ENCODE measurements at regions of chr4 and their contacts with region 1.

Region 1: DNA sequence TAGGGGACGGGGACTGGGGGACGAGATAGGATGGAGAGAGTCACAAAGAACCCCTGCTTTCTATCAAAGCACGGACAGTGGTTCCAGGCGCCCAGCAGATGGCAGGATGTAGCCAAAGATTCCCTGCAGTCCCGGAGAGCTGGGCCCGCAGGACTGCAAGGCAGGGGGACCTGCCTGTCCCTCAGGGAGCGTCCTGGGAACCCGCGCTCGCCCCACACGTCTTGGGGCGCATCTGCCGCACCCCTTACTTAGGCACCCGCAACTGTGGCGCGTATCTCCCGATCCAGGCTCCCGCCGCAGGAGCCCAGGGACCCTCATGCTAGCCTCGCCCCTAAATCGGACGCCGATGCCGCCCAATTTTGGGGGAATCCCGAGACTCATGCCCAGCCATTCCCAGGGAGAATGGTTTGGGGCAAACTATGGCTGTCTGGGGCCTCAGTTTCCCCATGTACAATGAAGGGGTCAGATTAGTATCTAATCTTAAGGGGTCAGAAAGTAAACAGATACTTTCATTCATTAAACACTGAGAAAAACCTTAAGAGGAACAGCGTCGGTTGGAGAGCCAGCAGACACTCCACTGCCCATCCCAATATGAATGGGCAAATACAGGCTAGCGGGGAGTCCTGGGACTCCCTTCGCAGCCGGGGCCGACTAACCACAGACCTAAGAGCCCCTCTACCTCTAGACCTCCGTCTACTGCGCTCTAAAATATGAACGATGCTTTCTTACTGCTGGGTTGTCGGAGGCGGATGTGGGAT is 581 bp upstream of the STK32B start:
- DNase-seq: peak; percentile 46
- ATAC-seq: peak; percentile 96
- H3K4me3 ChIP-seq: no peak overlapping the region
- H3K27ac ChIP-seq: no peak overlapping the region
- H3K4me1 ChIP-seq: peaks cover 11% of the 10 kb centered on the region
- H3K27me3 ChIP-seq: peaks cover 2 to 5% of the 10 kb centered on the region in 2 experiments; a peak in 1 of 5 replicates
- CTCF ChIP-seq: peak; percentile 86
- EP300 ChIP-seq: no peak
- POLR2A ChIP-seq: no peak
- RAD21 ChIP-seq: peak; percentile 82

Region 2: DNA sequence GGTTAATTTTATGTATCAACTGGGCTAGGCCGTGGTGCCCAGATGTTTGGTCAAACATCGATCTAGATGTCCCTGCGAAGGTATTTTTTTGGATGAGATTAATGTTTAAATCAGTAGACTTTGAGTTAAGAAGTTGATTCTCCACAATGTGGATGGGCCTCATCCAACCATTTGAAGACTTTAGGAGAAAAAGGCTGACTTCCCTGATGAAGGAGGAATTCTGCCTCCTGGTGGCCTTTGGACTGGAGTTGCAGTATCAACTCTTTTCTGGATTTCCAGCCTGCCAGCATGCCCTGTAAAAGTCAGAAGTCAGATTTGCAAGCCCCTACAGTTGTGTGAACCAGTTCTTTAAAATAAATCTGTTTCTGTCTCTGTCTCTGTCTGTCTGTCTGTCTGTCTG is 92.0 kb after region 1 on chr4:
- CTCF ChIA-PET with region 1: interaction called, 6 read pairs
- POLR2A ChIA-PET with region 1: no interaction called
- in situ Hi-C with region 1: loop called (anchors 10 kb)
- intact Hi-C with region 1: no loop called
- DNase-seq: peak; percentile 20
- ATAC-seq: no peak
- H3K4me3 ChIP-seq: no peak overlapping the region
- H3K27ac ChIP-seq: no peak overlapping the region
- H3K4me1 ChIP-seq: no peaks in the 10 kb centered on the region
- H3K27me3 ChIP-seq: peaks cover 0 to 1% of the 10 kb centered on the region in 2 experiments; a peak in 1 of 5 replicates
- CTCF ChIP-seq: peak; percentile 28; the same call in 1 of the 2 replicates
- EP300 ChIP-seq: no peak
- POLR2A ChIP-seq: no peak
- RAD21 ChIP-seq: no peak

Region 3: DNA sequence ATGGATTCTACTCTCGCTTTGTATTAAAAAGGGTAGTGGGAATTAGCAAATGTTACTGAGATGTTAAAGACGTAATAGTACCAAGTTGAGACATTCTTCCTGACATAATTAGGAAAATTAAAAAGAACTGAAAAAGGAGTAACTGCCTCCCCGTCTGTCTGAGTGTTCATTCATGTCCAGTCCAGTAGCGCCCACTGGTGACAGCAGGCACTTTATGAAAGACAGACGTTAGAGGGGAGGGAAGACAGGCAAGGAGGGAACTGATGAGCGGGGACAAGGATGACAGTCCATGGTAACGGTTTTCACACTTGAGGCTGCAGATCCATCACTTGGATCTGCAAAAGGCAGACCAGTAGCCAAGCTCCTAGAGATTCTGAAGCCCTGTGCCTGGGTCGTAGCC is 327.3 kb after region 1 on chr4:
- CTCF ChIA-PET with region 1: interaction called, 12 read pairs
- POLR2A ChIA-PET with region 1: no interaction called
- in situ Hi-C with region 1: no loop called
- intact Hi-C with region 1: loop called (anchors 1 kb)
- DNase-seq: peak; percentile 34
- ATAC-seq: peak; percentile 59; the same call in 1 of the 3 replicates
- H3K4me3 ChIP-seq: no peak overlapping the region
- H3K27ac ChIP-seq: no peak overlapping the region
- H3K4me1 ChIP-seq: no peaks in the 10 kb centered on the region
- H3K27me3 ChIP-seq: no peaks in the 10 kb centered on the region; a peak in 1 of 5 replicates
- CTCF ChIP-seq: peak; percentile 66
- EP300 ChIP-seq: no peak
- POLR2A ChIP-seq: no peak
- RAD21 ChIP-seq: no peak

Region 4: DNA sequence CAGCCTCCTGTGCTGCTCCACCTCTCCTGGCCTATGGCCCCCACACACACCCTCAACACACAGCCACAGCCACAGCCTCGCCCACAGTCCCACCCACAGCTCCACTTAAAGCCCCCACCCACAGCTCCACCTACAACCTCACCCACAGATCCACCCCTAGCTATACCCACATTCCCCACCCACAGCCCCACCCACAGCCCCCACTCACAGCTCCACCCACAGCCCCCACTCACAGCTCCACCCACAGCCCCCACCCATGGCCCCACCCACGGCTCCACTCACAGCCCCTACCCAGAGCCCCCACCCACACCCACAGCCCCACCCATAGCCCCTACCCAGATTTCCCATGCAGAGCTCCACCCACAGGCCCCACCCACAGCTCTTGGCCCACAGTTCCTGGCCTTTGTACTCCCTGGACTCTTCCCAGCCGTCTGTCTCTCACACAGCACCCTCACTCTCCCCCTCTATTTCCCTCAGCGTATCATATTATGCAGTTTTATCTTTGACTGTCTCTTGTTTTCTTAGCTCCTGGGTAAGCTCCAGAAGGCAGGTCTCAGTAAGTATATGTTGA is 335.1 kb after region 1 on chr4:
- CTCF ChIA-PET with region 1: no interaction called
- POLR2A ChIA-PET with region 1: no interaction called
- in situ Hi-C with region 1: loop called (anchors 5 kb)
- intact Hi-C with region 1: no loop called
- DNase-seq: no peak
- ATAC-seq: peak; percentile 44; the same call in 2 of the 3 replicates
- H3K4me3 ChIP-seq: no peak overlapping the region
- H3K27ac ChIP-seq: no peak overlapping the region
- H3K4me1 ChIP-seq: no peaks in the 10 kb centered on the region
- H3K27me3 ChIP-seq: no peaks in the 10 kb centered on the region
- CTCF ChIP-seq: no peak
- EP300 ChIP-seq: no peak
- POLR2A ChIP-seq: no peak
- RAD21 ChIP-seq: no peak

Region 5: DNA sequence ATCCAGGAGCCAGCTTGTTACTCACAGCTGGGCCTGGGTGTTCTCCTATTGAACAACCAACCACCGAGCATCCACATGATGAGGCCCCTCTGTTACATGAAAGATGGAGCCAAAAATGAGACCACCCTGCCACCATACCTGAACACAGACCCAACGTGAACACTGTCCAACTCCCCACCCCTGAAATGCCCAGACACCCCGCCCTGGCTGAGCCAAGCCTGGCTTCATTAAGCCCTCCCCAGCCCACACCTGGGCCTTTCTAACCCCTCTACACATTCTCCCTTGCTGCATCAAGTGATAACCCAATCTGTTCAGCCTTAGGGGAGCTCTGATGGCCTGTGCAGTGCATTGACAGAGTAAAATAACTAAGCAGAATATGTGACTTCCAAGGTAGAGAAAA is 741.0 kb after region 1 on chr4:
- CTCF ChIA-PET with region 1: interaction called, 3 read pairs
- POLR2A ChIA-PET with region 1: no interaction called
- in situ Hi-C with region 1: no loop called
- intact Hi-C with region 1: loop called (anchors 5 kb)
- DNase-seq: no peak
- ATAC-seq: no peak
- H3K4me3 ChIP-seq: no peak overlapping the region
- H3K27ac ChIP-seq: no peak overlapping the region
- H3K4me1 ChIP-seq: no peaks in the 10 kb centered on the region
- H3K27me3 ChIP-seq: no peaks in the 10 kb centered on the region; a peak in 1 of 5 replicates
- CTCF ChIP-seq: no peak
- EP300 ChIP-seq: no peak
- POLR2A ChIP-seq: no peak
- RAD21 ChIP-seq: no peak

Region 6: DNA sequence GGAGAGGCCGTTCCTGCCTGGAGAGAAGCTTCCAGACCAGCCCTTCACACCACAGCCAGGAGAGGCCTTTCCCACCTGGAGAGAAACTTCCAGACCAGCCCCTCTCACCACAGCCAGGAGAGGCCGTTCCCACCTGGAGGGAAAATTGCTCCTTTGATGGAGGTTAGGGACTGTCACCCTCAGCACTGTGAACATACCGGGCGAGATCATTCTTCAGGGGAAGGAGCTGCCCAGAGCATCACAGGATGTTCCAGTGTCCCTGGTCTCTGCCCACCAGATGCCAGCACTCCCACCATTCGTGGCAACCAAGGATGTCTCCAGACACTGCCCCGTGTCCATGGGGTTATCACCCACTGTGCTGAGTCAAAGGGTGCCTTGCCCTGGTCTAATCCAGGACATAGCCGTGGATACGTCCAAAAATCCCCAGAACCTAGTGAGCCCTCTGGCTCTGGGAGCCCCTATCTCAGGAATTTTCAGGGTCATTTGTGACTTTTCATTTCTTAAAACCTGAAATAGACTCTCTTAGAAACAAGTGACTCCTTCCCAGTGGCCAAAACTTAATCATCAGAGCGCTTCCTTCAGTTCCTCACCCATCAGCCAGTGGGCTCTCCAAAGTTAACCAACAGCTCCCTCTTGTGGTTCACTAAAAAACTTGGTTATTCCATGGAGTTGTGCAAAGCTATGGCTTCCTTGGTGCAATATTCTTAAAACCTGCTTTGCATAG is 762.0 kb after region 1 on chr4:
- CTCF ChIA-PET with region 1: interaction called, 7 read pairs
- POLR2A ChIA-PET with region 1: no interaction called
- in situ Hi-C with region 1: loop called (anchors 10 kb)
- intact Hi-C with region 1: no loop called
- DNase-seq: peak; percentile 58
- ATAC-seq: peak; percentile 86
- H3K4me3 ChIP-seq: no peak overlapping the region
- H3K27ac ChIP-seq: no peak overlapping the region
- H3K4me1 ChIP-seq: no peaks in the 10 kb centered on the region
- H3K27me3 ChIP-seq: no peaks in the 10 kb centered on the region; a peak in 1 of 5 replicates
- CTCF ChIP-seq: peak; percentile 72
- EP300 ChIP-seq: no peak
- POLR2A ChIP-seq: no peak
- RAD21 ChIP-seq: peak; percentile 45